Dorsolateral prefrontal cortex (tissue), 120 donors: ENCODE measurements at regions of chr3 and their contacts with region 1.

Region 1: DNA sequence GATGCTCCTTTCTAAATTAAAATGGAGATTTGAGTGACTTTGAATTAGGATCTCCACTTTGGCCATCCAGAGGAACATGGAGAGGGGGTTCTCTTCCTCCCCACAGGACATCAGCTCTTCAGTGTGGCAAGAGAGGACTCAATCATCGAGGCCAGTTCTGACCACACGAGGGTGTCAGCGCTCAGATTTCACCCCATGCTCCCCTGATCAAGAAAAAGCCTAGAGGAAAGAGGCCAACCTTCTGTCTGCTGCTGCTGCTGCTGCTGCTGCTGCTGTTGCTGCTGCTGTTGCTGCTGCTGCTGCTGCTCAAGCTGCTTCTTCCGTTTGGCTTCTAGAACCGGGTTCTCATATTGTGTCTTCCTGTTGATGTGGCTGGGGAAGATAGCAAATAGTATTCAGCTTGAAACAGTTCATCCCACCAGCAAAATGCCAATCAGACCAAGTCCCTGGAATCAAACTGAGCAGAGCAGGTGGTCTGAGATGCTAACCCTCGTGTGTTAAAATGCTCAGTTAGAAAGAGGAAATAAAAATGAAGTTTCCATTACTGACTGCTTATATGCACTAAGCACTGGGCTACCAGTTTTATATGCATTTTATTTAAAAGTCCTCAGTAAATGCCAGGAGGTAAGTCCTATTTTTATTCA is 599.0 kb downstream of the MAGI1 start:
- DNase-seq: peak; percentile 43 to 82 (median 61)
- H3K4me3 ChIP-seq: no peak overlapping the region
- H3K27ac ChIP-seq: peak overlapping the region in 12 of 59 donors; percentile 3 to 53 (median 21)
- H3K27me3 ChIP-seq: no peaks in the 10 kb centered on the region
- CTCF ChIP-seq: peak; percentile 29 to 89 (median 75)

Region 2: DNA sequence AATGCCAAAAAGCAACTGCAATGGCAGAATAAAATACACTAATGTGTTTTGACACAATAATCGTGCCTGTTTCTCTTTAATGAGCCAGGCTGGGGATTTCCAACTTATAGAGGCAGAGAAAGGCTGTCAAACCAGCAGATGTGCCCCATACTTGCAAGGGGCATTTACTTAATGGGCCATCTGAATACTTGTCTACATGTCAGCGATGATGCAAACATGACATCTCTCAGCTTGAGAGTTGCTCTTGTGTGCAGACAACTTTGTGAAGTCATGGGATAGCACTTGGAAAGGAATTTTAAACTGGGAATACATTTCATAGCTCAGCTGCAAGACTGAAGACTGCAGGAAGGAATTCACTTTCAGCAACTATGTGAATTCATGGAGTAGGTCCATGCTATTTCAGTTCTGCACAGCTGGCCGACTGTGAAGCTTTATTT is 624.5 kb before region 1 on chr3:
- intact Hi-C with region 1: no loop called
- DNase-seq: no peak
- H3K4me3 ChIP-seq: peak overlapping the region in 1 of 59 donors; percentile 17
- H3K27ac ChIP-seq: peak overlapping the region in 25 of 59 donors; percentile 1 to 74 (median 36)
- H3K27me3 ChIP-seq: no peaks in the 10 kb centered on the region
- CTCF ChIP-seq: no peak

Region 3: DNA sequence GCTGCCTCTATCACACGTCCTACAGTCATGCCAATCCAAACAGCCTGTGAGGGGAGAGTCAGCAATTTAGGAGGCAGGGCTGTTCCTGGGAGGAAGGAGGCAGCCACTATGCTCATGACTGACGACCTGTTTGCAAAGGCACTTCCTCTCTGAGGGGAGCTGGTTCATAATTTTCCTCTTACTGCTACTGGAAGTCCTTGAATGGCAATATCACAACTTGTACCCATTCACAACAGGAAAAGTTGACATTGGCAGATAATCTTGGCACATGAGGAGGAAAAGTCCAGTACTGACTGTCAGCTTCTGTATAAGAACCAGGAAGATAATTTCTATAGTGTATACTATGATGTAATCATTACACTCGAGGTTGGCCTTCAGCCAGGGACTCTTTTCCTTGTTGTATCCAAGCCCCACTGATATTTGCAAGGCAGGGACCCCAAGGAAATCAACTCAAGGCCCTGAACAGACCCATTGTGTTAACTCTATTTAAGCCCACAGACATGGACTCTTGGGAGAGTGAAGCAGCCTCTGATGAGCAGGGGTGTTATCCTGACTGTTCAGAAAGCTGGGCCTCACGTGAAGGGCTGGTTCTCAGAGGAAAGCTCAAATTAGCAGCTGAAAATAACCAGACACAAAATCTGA is 484.6 kb before region 1 on chr3:
- intact Hi-C with region 1: no loop called
- DNase-seq: no peak
- H3K4me3 ChIP-seq: no peak overlapping the region
- H3K27ac ChIP-seq: peak overlapping the region in 2 of 59 donors; percentile 18 to 21
- H3K27me3 ChIP-seq: no peaks in the 10 kb centered on the region
- CTCF ChIP-seq: no peak

Region 4: GRCh38 chr3:65342084-65342683 is 97.6 kb before region 1 on chr3:
- intact Hi-C with region 1: loop called in 1 of 2 experiments (anchors 10 kb)
- DNase-seq: peak in 3 of 10 donors; percentile 21 to 42 (median 34)
- H3K4me3 ChIP-seq: no peak overlapping the region
- H3K27ac ChIP-seq: no peak overlapping the region
- H3K27me3 ChIP-seq: no peaks in the 10 kb centered on the region
- CTCF ChIP-seq: peak in 53 of 56 donors; percentile 25 to 68 (median 52)

Region 5: DNA sequence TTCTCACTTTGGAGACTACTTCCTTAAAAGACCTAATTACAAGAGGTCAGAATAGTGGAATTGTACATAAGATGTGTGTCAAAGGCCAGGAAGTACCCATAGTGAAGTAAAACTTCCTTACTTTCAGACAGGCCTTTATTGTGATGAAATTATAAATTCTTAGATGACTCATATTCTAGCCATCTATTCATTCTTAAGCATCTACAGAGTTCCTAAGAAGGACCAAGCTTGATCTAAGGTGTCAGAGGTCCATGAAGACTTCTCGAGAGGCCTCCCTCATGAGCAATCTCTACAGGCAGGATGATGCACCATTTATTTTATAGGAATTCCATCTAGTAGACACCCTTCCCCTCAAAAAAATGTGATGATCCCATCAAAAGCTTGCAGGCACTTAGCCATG is 105.7 kb after region 1 on chr3:
- intact Hi-C with region 1: no loop called
- DNase-seq: no peak
- H3K4me3 ChIP-seq: no peak overlapping the region
- H3K27ac ChIP-seq: no peak overlapping the region
- H3K27me3 ChIP-seq: no peaks in the 10 kb centered on the region
- CTCF ChIP-seq: no peak

Region 6: GRCh38 chr3:65597226-65597951 is 157.6 kb after region 1 on chr3:
- intact Hi-C with region 1: loop called (anchors 5 to 10 kb)
- DNase-seq: peak; percentile 61 to 82 (median 75)
- H3K4me3 ChIP-seq: peak overlapping the region; percentile 47 to 83 (median 67)
- H3K27ac ChIP-seq: peak overlapping the region; percentile 36 to 94 (median 86)
- H3K27me3 ChIP-seq: no peaks in the 10 kb centered on the region
- CTCF ChIP-seq: peak in 2 of 56 donors; percentile 17 to 18

Region 7: DNA sequence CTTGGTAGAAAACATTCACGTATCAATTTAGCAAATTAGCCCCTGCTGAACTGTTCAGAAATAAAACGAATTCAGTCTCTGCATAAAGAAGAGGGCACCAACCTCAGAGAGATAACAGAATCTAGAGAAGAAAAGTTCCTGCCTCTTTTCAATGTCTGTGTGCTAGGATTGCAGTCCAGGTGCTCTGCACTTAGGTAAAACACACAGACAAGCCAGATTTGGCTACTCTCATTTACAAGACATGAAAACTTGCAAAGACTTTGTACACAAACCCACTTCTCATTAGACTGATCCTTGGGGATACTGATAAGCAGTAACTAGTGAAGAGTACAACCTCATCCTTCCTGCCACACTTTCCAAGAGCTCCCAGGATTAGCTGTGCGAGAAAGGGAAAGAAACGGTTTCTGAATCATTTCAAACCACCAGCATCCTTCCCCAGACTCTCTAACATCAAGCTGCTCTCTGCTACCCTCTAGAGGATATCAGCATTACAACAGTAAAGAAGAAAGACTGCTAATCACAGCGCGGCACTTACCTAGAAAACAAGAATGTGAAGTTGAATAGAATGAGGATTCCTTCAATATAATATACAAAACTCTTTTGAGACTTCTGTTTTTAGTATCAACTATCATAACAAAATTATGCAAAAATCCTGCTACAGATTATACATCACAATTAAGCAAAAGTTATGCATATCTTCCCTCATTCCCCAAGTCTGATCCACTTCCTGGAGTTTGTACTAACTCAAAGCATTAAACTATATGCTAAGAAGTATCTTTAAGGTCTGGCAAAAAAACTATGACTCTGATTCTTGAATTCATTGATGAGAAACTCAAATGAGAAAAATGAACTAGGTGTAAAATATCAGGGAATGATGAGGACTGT is 292.5 kb after region 1 on chr3:
- intact Hi-C with region 1: loop called (anchors 2 to 10 kb)
- DNase-seq: peak in 1 of 10 donors; percentile 37
- H3K4me3 ChIP-seq: peak overlapping the region in 21 of 59 donors; percentile 3 to 47 (median 27)
- H3K27ac ChIP-seq: peak overlapping the region in 3 of 59 donors; percentile 12 to 57 (median 18)
- H3K27me3 ChIP-seq: no peaks in the 10 kb centered on the region
- CTCF ChIP-seq: peak; percentile 65 to 95 (median 86)